Left ventricle myocardium superior (tissue), 1 donor: ENCODE measurements at regions of chr7 and their contacts with region 1.

Region 1: GRCh38 chr7:47088329-47089067 is 493.4 kb downstream of the TNS3 start:
- DNase-seq: peak; percentile 75
- ATAC-seq: peak; percentile 97

Region 2: GRCh38 chr7:45923290-45923689 is 1165.2 kb before region 1 on chr7:
- intact Hi-C with region 1: loop called (anchors 10 kb)
- DNase-seq: peak; percentile 86
- ATAC-seq: peak; percentile 57

Region 3: GRCh38 chr7:46776790-46777189 is 311.7 kb before region 1 on chr7:
- intact Hi-C with region 1: loop called (anchors 10 kb)
- DNase-seq: no peak
- ATAC-seq: no peak